Natural killer cell (primary cell): ENCODE measurements at regions of chr19 and their contacts with region 1.

Region 1: DNA sequence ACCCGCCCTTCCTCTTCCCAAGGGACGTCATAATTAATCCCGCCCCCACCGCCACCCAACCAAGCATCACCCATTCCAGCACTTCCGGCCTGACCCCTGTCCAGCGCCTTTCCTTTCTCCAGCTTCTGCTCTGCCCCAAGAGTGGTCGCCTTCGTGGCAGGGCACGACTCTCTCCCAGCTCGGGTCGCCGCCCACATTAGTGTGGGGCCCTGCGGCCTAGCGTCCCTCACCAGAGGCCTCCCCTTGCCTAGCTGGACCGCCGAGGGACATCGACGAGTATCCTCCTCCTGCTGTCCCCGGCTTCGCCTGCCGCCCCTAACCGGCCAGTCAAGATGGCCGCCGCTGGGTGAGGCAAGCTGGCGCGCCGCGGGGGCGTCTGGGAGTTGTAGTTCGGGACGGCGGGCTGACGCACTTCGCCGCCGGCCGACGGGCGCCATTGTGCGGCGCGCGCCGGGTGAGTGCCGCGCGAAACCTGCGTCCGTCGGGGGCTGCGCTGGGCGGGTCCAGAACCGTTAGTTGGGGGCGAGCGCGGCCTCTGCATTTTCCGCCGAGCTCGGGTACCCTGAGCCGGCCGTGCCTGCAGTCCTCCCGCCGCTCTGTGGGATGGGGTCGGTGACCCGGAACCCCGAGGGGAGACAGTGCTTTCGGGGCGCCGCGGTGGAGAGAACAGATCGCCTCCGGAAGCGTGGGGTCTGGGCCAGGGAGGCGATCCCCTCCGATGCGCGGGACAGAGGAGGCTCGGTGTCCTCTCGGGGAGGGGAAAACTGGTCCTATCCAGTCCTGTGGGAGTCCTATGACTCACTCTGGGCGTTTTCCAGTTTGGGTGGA is at the start of gene ZNF274:
- DNase-seq: peak; percentile 95
- ATAC-seq: peak; percentile 81 to 95 (median 90)
- H3K4me3 ChIP-seq: peak within 1 kb of the TSS; percentile 88
- H3K4me3 Mint-ChIP-seq: peak within 1 kb of the TSS; percentile 98
- H3K27ac ChIP-seq: peak within 1 kb of the TSS; percentile 99
- H3K27ac Mint-ChIP-seq: peak within 1 kb of the TSS; percentile 100
- H3K4me1 ChIP-seq: peaks cover 19% of the 10 kb centered on the region
- H3K4me1 Mint-ChIP-seq: peaks cover 17 to 22% of the 10 kb centered on the region in 2 donors
- H3K27me3 ChIP-seq: no peaks in the 10 kb centered on the region
- H3K27me3 Mint-ChIP-seq: no peaks in the 10 kb centered on the region
- CTCF ChIP-seq: no peak
- total RNA-seq, gene ZNF274: 25.5 to 33.0 (median 30.1) TPM

Region 2: GRCh38 chr19:58022283-58022660 is 160.9 kb before region 1 on chr19:
- intact Hi-C with region 1: no loop called
- DNase-seq: no peak
- ATAC-seq: no peak
- H3K4me3 ChIP-seq: no peak overlapping the region
- H3K4me3 Mint-ChIP-seq: no peak overlapping the region
- H3K27ac ChIP-seq: no peak overlapping the region
- H3K27ac Mint-ChIP-seq: no peak overlapping the region
- H3K4me1 ChIP-seq: no peaks in the 10 kb centered on the region
- H3K4me1 Mint-ChIP-seq: no peaks in the 10 kb centered on the region
- H3K27me3 ChIP-seq: no peaks in the 10 kb centered on the region
- H3K27me3 Mint-ChIP-seq: peaks cover 0 to 2% of the 10 kb centered on the region in 2 donors
- CTCF ChIP-seq: no peak

Region 3: DNA sequence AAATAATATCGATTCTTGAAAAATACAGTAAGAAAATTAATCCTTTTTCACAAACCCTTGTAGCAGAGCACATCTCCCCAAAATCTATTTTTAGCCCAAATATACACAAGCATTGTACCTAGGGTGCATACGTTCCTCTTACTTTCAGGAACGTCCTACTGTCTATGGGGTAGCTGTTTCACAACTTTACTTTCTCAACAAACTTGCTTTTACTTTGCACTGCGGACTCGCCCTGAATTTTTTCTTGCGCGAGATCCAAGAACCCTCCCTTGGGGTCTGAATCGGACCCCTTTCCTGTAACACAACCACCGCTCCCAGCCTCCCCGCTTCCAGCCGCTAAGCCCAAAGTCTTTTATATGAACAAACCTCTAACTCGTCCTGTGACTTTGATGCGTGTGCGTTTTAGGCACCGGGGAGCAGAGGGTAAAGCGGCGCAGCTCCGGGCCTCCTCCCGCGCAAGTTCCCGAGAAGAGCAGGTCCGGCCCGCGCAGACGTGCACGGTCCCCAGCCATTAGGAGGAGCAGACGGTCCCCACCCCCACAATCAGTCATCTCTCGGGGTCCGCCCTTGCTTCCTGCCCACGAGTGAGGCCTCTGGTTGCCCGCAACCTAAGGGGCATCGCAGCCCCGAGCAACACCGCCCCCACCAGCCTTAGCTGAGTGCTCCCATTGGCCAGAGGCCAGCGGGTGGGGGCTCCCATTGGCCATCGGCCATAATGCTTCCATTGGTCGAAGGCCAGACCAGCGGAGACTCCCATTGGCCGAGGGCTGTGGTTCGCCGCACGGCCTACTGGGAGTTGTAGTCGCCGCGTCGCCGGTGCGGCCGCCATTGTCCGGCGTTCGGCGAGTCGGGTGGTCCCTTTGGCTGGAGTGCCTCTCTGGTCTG is 95.2 kb after region 1 on chr19 and contains the start of gene ZNF8:
- intact Hi-C with region 1: loop called (anchors 2 kb)
- DNase-seq: peak; percentile 93 to 97
- ATAC-seq: peak; percentile 97 to 100 (median 98)
- H3K4me3 ChIP-seq: peak within 1 kb of the TSS; percentile 94
- H3K4me3 Mint-ChIP-seq: peak within 1 kb of the TSS; percentile 96
- H3K27ac ChIP-seq: peak within 1 kb of the TSS; percentile 79
- H3K27ac Mint-ChIP-seq: peak within 1 kb of the TSS; percentile 94 to 99
- H3K4me1 ChIP-seq: peaks cover 13% of the 10 kb centered on the region
- H3K4me1 Mint-ChIP-seq: peaks cover 30 to 40% of the 10 kb centered on the region in 2 donors
- H3K27me3 ChIP-seq: no peaks in the 10 kb centered on the region
- H3K27me3 Mint-ChIP-seq: no peaks in the 10 kb centered on the region
- CTCF ChIP-seq: no peak
- total RNA-seq, gene ZNF8: 6.4 to 8.7 (median 7.7) TPM

Region 4: GRCh38 chr19:58326914-58327726 is 143.9 kb after region 1 on chr19 and contains the start of gene ZSCAN22:
- intact Hi-C with region 1: no loop called
- DNase-seq: peak; percentile 87 to 93
- ATAC-seq: peak; percentile 71 to 87 (median 74)
- H3K4me3 ChIP-seq: peak within 1 kb of the TSS; percentile 61
- H3K4me3 Mint-ChIP-seq: no peak within 1 kb of the TSS
- H3K27ac ChIP-seq: peak within 1 kb of the TSS; percentile 96
- H3K27ac Mint-ChIP-seq: no peak within 1 kb of the TSS
- H3K4me1 ChIP-seq: peaks cover 29% of the 10 kb centered on the region
- H3K4me1 Mint-ChIP-seq: no peaks in the 10 kb centered on the region
- H3K27me3 ChIP-seq: no peaks in the 10 kb centered on the region
- H3K27me3 Mint-ChIP-seq: no peaks in the 10 kb centered on the region
- CTCF ChIP-seq: no peak
- total RNA-seq, gene ZSCAN22: 2.9 to 4.8 (median 3.2) TPM

Region 5: GRCh38 chr19:58380722-58381466 is 197.7 kb after region 1 on chr19 and contains the start of gene ZNF837:
- intact Hi-C with region 1: loop called (anchors 10 kb)
- DNase-seq: peak; percentile 95 to 100
- ATAC-seq: peak; percentile 85 to 94 (median 86)
- H3K4me3 ChIP-seq: peak within 1 kb of the TSS; percentile 50
- H3K4me3 Mint-ChIP-seq: peak within 1 kb of the TSS; percentile 89
- H3K27ac ChIP-seq: peak within 1 kb of the TSS; percentile 92
- H3K27ac Mint-ChIP-seq: peak within 1 kb of the TSS; percentile 93 to 94
- H3K4me1 ChIP-seq: peaks cover 37% of the 10 kb centered on the region
- H3K4me1 Mint-ChIP-seq: peaks cover 13 to 29% of the 10 kb centered on the region in 2 donors
- H3K27me3 ChIP-seq: no peaks in the 10 kb centered on the region
- H3K27me3 Mint-ChIP-seq: no peaks in the 10 kb centered on the region
- CTCF ChIP-seq: no peak
- total RNA-seq, gene ZNF837: 0.63 to 1.4 (median 1.3) TPM

Region 6: DNA sequence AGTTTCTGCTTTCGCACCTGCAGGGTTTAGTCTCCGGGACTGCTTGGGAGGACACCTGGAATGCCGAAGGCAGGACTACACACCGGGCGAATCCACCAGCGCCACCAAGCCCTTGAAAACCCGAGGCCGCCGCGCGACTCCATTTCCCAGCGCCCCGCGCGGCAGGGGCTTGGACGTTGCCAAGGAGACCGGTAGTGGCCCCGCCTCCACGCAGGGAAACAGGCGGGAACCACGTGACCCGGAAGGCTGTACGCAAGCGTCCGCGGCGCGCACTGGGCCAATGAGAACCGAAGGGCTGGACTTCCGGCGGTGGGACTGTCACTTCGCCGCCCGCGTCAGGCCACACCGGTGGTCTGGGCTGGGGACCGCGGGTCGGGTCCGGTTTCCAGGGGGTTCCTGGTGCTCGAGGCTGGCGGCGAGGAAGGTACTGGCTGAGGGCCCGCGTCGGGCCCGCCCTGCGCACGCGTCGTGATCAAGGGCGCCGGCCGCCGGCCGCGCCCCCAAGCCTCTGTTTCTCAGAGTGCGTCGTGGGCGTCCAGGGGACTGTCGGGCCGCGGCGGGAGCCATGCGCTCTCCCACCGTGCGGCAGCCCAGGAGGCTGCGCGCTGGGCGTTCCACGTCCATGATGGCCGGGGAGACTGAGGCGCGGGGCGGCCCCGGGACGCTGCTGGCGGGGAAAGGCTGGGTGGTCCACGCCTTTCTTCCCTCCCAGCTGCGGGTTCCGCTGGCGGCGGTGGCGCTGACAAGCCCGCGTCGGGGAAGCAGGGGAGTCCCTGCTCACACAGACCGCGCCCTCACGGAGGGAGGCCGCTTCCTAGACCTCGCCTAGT is 283.8 kb after region 1 on chr19 and contains the start of gene ZNF324:
- intact Hi-C with region 1: loop called (anchors 1 kb)
- DNase-seq: peak; percentile 97 to 99
- ATAC-seq: peak; percentile 92 to 97 (median 95)
- H3K4me3 ChIP-seq: peak within 1 kb of the TSS; percentile 58
- H3K4me3 Mint-ChIP-seq: peak within 1 kb of the TSS; percentile 89
- H3K27ac ChIP-seq: peak within 1 kb of the TSS; percentile 73
- H3K27ac Mint-ChIP-seq: peak within 1 kb of the TSS; percentile 84 to 92
- H3K4me1 ChIP-seq: peaks cover 18% of the 10 kb centered on the region
- H3K4me1 Mint-ChIP-seq: peaks cover 16 to 21% of the 10 kb centered on the region in 2 donors
- H3K27me3 ChIP-seq: no peaks in the 10 kb centered on the region
- H3K27me3 Mint-ChIP-seq: no peaks in the 10 kb centered on the region
- CTCF ChIP-seq: no peak
- total RNA-seq, gene ZNF324: 21.3 to 23.7 (median 23.3) TPM